ENCODE measurements at regions of chr6 and their contacts with region 1.

Region 1: GRCh38 chr6:116371120-116371917 is 572 bp downstream of the DSE start:
- DNase-seq: peak; percentile 24 to 43 (median 35)
- H3K4me3 ChIP-seq: peak overlapping the region; percentile 43 to 47
- H3K4me3 Mint-ChIP-seq: peak overlapping the region; percentile 81 to 95 (median 92)
- H3K27ac ChIP-seq: peak overlapping the region; percentile 44
- H3K27ac Mint-ChIP-seq: peak overlapping the region; percentile 54 to 91 (median 77)
- H3K4me1 ChIP-seq: peaks cover 18% of the 10 kb centered on the region
- H3K4me1 Mint-ChIP-seq: peaks cover 16 to 31% (median 18%) of the 10 kb centered on the region in 4 donors
- H3K27me3 ChIP-seq: no peaks in the 10 kb centered on the region
- H3K27me3 Mint-ChIP-seq: peaks cover 4 to 8% of the 10 kb centered on the region in 2 donors

Region 2: GRCh38 chr6:116393430-116393829 is 22.1 kb after region 1 on chr6:
- CTCF ChIA-PET with region 1: interaction called, 8 read pairs
- POLR2A ChIA-PET with region 1: interaction called, 11 read pairs
- intact Hi-C with region 1: loop called (anchors 2 kb)
- DNase-seq: no peak
- H3K4me3 ChIP-seq: no peak overlapping the region
- H3K4me3 Mint-ChIP-seq: peak overlapping the region in 5 of 8 donors; percentile 17 to 66 (median 37)
- H3K27ac ChIP-seq: no peak overlapping the region
- H3K27ac Mint-ChIP-seq: peak overlapping the region; percentile 61 to 99 (median 90)
- H3K4me1 ChIP-seq: peaks cover 40% of the 10 kb centered on the region
- H3K4me1 Mint-ChIP-seq: peaks cover 34 to 42% (median 38%) of the 10 kb centered on the region in 4 donors
- H3K27me3 ChIP-seq: no peaks in the 10 kb centered on the region
- H3K27me3 Mint-ChIP-seq: no peaks in the 10 kb centered on the region

Measured in CD4-positive, alpha-beta memory T cell (primary cell).